ENCODE measurements at regions of chr2 and their contacts with region 1.

Region 1: GRCh38 chr2:218852911-218853667 is 6.5 kb upstream of the WNT6 start:
- DNase-seq: peak; percentile 85
- ATAC-seq: peak; percentile 85
- H3K4me3 Mint-ChIP-seq: no peak overlapping the region
- H3K27ac Mint-ChIP-seq: no peak overlapping the region
- H3K4me1 Mint-ChIP-seq: no peaks in the 10 kb centered on the region
- H3K27me3 Mint-ChIP-seq: peaks cover 61% of the 10 kb centered on the region
- CTCF ChIP-seq: peak; percentile 89

Region 2: DNA sequence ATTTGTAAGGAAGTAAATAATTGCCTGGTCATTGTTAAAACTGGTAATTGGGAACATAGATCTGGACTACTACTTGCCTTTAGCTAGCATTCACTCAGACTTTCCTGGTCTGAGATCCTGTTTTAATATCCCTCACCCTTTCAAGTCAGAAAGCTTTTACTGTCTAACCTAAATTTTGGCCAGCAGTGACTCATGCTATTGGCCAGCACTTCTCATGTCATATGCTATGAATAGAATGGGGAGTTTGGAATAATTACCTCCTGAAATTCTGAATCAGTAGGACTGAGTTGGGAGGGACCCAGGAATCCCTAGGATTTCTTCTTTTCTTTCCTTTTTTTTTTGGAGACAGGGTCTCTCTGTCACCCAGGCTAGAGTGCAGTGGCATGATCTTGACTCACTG is 161.9 kb before region 1 on chr2:
- CTCF ChIA-PET with region 1: interaction called, 12 read pairs
- POLR2A ChIA-PET with region 1: no interaction called
- intact Hi-C with region 1: no loop called
- DNase-seq: no peak
- ATAC-seq: no peak
- H3K4me3 Mint-ChIP-seq: no peak overlapping the region
- H3K27ac Mint-ChIP-seq: no peak overlapping the region
- H3K4me1 Mint-ChIP-seq: peaks cover 2% of the 10 kb centered on the region
- H3K27me3 Mint-ChIP-seq: no peaks in the 10 kb centered on the region
- CTCF ChIP-seq: no peak

Region 3: DNA sequence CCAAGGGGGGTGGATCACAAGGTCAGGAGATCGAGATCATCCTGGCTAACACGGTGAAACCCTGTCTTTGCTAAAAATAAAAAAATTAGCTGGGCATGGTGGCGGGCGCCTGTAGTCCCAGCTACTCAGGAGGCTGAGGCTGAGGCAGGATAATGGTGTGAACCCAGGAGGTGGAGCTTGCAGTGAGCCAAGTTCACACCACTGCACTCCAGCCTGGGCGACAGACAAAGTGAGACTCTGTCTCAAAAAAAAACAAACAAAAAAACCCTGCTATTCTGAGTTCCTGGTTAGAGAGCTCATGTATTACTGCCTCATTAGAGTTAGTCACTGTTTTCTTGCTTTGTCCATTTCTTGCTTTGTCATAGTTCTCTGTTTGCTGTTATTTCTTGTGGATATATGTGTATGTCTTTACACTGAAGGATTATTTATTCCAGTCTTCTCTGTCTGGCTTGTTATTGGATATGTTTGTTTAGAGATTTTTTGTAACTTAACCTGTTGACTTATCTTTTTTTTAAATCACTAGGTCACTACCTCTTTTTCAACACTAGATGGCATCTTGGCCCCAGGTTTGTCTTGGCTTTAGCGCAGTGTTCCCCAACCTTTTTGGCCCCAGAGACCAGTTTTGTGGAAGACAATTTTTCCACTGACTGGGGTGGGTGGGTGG is 125.5 kb before region 1 on chr2:
- CTCF ChIA-PET with region 1: interaction called, 74 read pairs
- POLR2A ChIA-PET with region 1: no interaction called
- intact Hi-C with region 1: loop called (anchors 5 kb)
- DNase-seq: no peak
- ATAC-seq: no peak
- H3K4me3 Mint-ChIP-seq: no peak overlapping the region
- H3K27ac Mint-ChIP-seq: no peak overlapping the region
- H3K4me1 Mint-ChIP-seq: peaks cover 16% of the 10 kb centered on the region
- H3K27me3 Mint-ChIP-seq: no peaks in the 10 kb centered on the region
- CTCF ChIP-seq: peak; percentile 58

Region 4: GRCh38 chr2:218756599-218757377 is 96.3 kb before region 1 on chr2:
- CTCF ChIA-PET with region 1: interaction called, 14 read pairs
- POLR2A ChIA-PET with region 1: no interaction called
- intact Hi-C with region 1: no loop called
- DNase-seq: no peak
- ATAC-seq: no peak
- H3K4me3 Mint-ChIP-seq: no peak overlapping the region
- H3K27ac Mint-ChIP-seq: no peak overlapping the region
- H3K4me1 Mint-ChIP-seq: peaks cover 2% of the 10 kb centered on the region
- H3K27me3 Mint-ChIP-seq: no peaks in the 10 kb centered on the region
- CTCF ChIP-seq: no peak

Region 5: GRCh38 chr2:218898109-218898878 is 45.2 kb after region 1 on chr2:
- CTCF ChIA-PET with region 1: interaction called, 89 read pairs
- POLR2A ChIA-PET with region 1: interaction called, 5 read pairs
- intact Hi-C with region 1: loop called (anchors 2 kb)
- DNase-seq: peak; percentile 90
- ATAC-seq: peak; percentile 26
- H3K4me3 Mint-ChIP-seq: peak overlapping the region; percentile 56
- H3K27ac Mint-ChIP-seq: peak overlapping the region; percentile 73
- H3K4me1 Mint-ChIP-seq: peaks cover 43% of the 10 kb centered on the region
- H3K27me3 Mint-ChIP-seq: peaks cover 33% of the 10 kb centered on the region
- CTCF ChIP-seq: peak; percentile 99